ENCODE measurements at regions of chr19 and their contacts with region 1.

Region 1: DNA sequence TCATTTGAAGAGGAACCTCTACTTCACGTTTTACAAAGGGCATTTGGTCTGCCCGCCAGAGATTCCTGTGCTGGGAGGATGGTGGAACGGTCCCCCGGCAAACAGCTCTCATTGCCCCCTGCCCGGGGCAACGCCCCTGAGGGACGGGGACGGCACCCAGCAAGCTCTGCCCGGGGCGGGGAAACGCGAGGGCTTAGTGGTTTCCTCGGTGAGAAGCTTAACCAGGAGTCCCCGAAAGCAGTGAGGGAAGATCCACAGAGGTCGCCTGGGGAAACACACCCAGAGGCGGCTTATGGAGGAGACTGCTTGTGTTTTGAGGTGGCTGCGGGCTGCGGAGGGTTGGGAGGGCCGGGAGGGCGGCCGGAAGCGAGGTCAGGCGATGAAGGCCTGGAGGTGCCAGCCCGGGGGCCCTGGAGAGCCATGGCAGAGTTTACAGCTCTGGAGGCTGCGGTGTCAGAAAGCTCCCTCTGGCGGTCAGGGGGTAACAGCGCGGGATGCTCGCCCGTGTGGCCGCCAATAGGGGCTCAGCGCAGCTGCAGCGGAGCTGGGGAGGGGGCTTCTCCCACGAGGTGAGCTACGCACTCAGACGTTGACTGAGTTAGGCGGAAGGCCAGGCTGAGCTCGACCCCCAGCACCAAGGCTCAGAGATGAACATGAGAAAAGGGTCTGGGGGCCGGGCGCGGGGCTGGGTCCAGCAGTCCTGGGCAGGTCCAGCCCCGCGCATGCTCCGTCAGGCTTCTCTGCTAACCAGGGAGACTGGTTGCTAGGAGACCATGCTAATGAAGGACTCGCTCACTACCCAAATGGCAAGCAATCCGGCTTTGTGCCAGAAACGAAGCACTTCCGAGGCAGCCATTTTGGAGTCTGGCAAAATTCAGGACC is 652 bp upstream of the TPGS1 start:
- DNase-seq: peak; percentile 85 to 98 (median 92)
- ATAC-seq: peak; percentile 52
- H3K4me3 ChIP-seq: peak overlapping the region; percentile 91
- H3K4me3 Mint-ChIP-seq: peak overlapping the region; percentile 98
- H3K27ac ChIP-seq: peak overlapping the region; percentile 88 to 99
- H3K27ac Mint-ChIP-seq: peak overlapping the region; percentile 94
- H3K4me1 ChIP-seq: peaks cover 55% of the 10 kb centered on the region
- H3K4me1 Mint-ChIP-seq: peaks cover 37% of the 10 kb centered on the region
- H3K27me3 ChIP-seq: no peaks in the 10 kb centered on the region
- H3K27me3 Mint-ChIP-seq: no peaks in the 10 kb centered on the region
- CTCF ChIP-seq: peak; percentile 99

Region 2: DNA sequence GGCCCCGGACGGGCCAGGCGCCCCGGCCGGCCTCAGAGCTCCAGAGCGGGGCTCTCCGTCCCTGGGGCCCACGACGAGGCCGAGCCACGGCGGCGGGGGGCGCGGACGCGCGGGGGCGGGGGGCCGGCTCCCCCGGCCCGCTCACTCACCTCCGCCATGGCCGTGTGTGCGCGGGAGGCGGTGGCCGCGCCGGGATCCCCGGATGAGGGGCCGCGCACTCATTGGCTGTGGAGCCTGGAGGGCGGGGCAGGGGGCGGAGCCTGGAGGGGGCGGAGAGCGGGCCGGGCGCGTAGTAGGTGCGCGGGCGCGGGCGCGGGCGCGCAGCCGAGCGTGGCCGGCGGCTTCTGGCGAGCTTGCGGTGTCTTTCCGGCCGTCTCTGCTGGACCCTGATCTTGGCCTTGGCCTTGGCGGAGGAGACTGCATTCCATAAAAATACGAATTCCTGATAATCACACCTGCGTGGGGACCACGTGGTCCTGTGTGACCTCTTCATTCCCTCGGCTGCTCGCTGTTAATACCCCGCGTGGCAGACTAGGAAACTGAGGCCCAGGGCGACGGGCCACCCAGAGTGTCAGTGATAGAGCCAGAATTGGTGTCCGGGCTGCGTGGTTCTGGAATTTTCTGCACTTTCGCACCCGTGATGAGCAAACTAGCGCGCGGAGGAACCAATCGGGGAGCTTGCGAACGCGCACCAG is 161.9 kb before region 1 on chr19 and contains the start of gene MIER2:
- CTCF ChIA-PET with region 1: interaction called, 5 read pairs
- POLR2A ChIA-PET with region 1: no interaction called
- intact Hi-C with region 1: loop called in 1 of 2 experiments (anchors 5 kb)
- DNase-seq: peak; percentile 74 to 96 (median 88)
- ATAC-seq: peak; percentile 92
- H3K4me3 ChIP-seq: peak within 1 kb of the TSS; percentile 71
- H3K4me3 Mint-ChIP-seq: peak within 1 kb of the TSS; percentile 91
- H3K27ac ChIP-seq: no peak within 1 kb of the TSS
- H3K27ac Mint-ChIP-seq: peak within 1 kb of the TSS; percentile 63
- H3K4me1 ChIP-seq: peaks cover 46% of the 10 kb centered on the region
- H3K4me1 Mint-ChIP-seq: peaks cover 51% of the 10 kb centered on the region
- H3K27me3 ChIP-seq: no peaks in the 10 kb centered on the region
- H3K27me3 Mint-ChIP-seq: no peaks in the 10 kb centered on the region
- CTCF ChIP-seq: no peak
- total RNA-seq, gene MIER2: 9.5 to 11.5 TPM

Region 3: DNA sequence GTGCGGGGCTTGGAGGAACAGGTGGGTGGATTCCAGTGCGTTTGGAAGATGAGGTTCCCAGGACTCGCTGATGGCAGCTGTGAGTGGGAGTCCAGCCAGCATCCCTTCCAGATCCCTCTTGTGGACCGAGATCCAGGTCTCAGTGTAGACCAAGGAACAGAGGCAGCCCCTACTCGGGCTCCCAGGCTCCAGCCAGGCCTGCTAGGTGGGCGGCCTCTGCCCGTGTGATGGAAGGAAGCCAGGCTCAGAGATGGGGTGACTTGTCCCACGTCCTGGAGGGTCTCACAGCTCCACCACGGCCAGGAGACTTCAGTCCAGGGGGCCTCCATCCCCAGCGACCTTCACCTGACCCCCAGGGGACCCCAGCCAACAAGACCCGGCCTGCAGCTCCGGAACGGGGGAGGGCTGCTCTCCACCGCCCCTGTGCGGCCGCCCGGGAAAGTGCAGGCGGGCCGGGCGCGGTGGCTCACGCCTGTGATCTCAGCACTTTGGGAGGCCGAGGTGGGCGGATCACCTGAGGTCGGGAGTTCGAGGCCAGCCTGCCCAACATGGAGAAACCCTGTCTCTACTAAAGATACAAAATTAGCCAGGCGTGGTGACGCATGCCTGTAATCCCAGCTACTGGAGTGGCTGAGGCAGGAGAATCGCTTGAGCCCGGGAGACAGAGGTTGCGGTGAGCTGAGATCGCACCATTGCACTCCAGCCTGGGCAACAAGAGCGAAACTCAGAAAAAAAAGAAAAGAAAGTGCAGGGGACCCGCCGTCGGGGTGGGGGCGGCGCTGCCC is 11.1 kb before region 1 on chr19:
- CTCF ChIA-PET with region 1: interaction called, 18 read pairs
- POLR2A ChIA-PET with region 1: interaction called, 7 read pairs
- intact Hi-C with region 1: no loop called
- DNase-seq: peak in 11 of 14 experiments; percentile 20 to 69 (median 47)
- ATAC-seq: peak; percentile 73
- H3K4me3 ChIP-seq: no peak overlapping the region
- H3K4me3 Mint-ChIP-seq: no peak overlapping the region
- H3K27ac ChIP-seq: no peak overlapping the region
- H3K27ac Mint-ChIP-seq: no peak overlapping the region
- H3K4me1 ChIP-seq: peaks cover 23% of the 10 kb centered on the region
- H3K4me1 Mint-ChIP-seq: no peaks in the 10 kb centered on the region
- H3K27me3 ChIP-seq: peaks cover 19 to 27% of the 10 kb centered on the region in 2 experiments
- H3K27me3 Mint-ChIP-seq: peaks cover 18% of the 10 kb centered on the region
- CTCF ChIP-seq: peak; percentile 50

Region 4: GRCh38 chr19:531009-531752 is 24.5 kb after region 1 on chr19:
- CTCF ChIA-PET with region 1: interaction called, 58 read pairs
- POLR2A ChIA-PET with region 1: interaction called, 75 read pairs
- intact Hi-C with region 1: loop called (anchors 1 to 2 kb)
- DNase-seq: peak; percentile 70 to 95 (median 88)
- ATAC-seq: peak; percentile 79
- H3K4me3 ChIP-seq: peak overlapping the region; percentile 72
- H3K4me3 Mint-ChIP-seq: peak overlapping the region; percentile 87
- H3K27ac ChIP-seq: peak overlapping the region; percentile 34 to 75
- H3K27ac Mint-ChIP-seq: peak overlapping the region; percentile 61
- H3K4me1 ChIP-seq: peaks cover 45% of the 10 kb centered on the region
- H3K4me1 Mint-ChIP-seq: peaks cover 9% of the 10 kb centered on the region
- H3K27me3 ChIP-seq: peaks cover 0 to 3% of the 10 kb centered on the region in 2 experiments
- H3K27me3 Mint-ChIP-seq: no peaks in the 10 kb centered on the region
- CTCF ChIP-seq: no peak

Region 5: DNA sequence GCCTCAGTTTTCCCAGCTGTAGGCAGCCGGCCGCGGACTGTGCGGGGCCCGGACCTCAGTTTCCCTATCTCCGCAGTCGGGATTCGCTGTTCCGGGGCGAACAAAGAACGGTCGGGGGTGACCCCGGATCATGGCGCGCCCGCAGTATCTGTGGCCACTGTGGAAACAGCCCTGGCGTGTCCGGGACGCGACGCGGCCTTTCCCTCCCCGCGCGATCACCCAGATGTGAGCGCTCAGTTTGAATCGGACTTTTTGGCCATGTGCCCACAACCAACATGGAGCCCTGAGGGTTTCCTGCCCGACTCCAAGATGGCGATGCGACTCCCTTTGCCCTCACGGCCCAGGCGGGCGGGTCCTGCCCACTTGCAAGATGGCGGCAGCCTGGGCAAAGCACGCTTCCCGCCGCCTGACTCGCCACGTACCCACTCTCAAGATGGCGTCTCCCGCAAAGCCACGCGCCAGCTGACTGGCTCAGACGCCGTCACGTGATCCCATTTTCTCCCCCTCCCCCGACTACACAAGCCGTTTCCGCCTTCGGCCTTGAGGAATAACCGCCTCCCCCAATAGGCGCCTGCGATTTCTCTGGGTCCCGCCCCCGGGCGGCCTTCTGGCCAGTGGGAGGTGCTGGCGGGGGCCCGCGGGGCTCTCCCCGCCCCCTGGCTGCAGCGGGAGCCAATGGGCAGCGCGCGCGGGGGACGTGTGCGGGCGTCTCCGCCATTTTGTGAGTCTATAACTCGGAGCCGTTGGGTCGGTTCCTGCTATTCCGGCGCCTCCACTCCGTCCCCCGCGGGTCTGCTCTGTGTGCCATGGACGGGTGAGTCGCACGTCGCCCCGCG is 290.3 kb after region 1 on chr19 and contains the start of gene PTBP1:
- CTCF ChIA-PET with region 1: no interaction called
- POLR2A ChIA-PET with region 1: interaction called, 9 read pairs
- intact Hi-C with region 1: loop called in 1 of 2 experiments (anchors 5 kb)
- DNase-seq: peak; percentile 97 to 100 (median 99)
- ATAC-seq: peak; percentile 83
- H3K4me3 ChIP-seq: peak within 1 kb of the TSS; percentile 87
- H3K4me3 Mint-ChIP-seq: peak within 1 kb of the TSS; percentile 89
- H3K27ac ChIP-seq: peak within 1 kb of the TSS; percentile 67 to 72
- H3K27ac Mint-ChIP-seq: peak within 1 kb of the TSS; percentile 87
- H3K4me1 ChIP-seq: peaks cover 48% of the 10 kb centered on the region
- H3K4me1 Mint-ChIP-seq: peaks cover 36% of the 10 kb centered on the region
- H3K27me3 ChIP-seq: no peaks in the 10 kb centered on the region
- H3K27me3 Mint-ChIP-seq: no peaks in the 10 kb centered on the region
- CTCF ChIP-seq: no peak
- total RNA-seq, gene PTBP1: 246 to 252 TPM

Region 6: DNA sequence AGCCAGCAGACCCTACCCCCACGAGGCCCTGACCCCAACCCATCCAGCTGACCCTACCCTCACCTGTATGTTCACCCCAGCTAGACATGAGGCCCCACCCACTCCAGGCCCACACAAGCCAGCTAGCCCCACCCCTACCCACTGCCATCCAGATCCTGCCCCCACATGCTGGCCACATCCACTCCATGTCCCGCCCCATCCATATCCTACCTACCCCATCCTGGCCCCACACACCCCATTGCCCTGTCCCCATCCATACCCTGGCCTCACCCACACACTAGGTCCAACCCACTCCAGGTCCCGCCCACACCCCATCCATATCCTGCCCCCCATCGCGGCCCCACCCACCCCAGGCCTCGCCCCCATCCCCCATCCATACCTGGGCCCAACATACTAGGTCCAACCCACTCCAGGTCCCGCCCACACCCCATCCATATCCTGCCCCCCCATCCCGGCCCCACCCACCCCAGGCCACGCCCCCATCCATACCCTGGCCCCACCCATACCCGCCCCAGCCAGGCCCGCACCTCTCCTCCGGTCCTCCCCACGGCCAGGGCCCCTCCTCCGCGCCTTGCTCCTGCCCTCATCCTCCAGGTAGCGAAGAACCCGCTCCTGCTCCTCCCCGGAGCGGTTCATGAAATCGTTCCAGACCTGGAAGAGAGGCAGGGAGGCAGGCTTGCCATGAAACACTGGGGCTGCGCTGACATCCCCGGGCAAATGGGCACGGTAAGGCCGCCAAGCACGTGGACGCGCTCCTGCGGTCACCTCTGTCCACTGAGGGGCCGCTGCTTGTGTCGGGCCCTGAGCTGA is 393.9 kb after region 1 on chr19:
- CTCF ChIA-PET with region 1: no interaction called
- POLR2A ChIA-PET with region 1: no interaction called
- intact Hi-C with region 1: no loop called
- DNase-seq: peak in 7 of 14 experiments; percentile 38 to 72 (median 64)
- ATAC-seq: peak; percentile 77
- H3K4me3 ChIP-seq: no peak overlapping the region
- H3K4me3 Mint-ChIP-seq: no peak overlapping the region
- H3K27ac ChIP-seq: no peak overlapping the region
- H3K27ac Mint-ChIP-seq: peak overlapping the region; percentile 42
- H3K4me1 ChIP-seq: peaks cover 49% of the 10 kb centered on the region
- H3K4me1 Mint-ChIP-seq: peaks cover 28% of the 10 kb centered on the region
- H3K27me3 ChIP-seq: no peaks in the 10 kb centered on the region
- H3K27me3 Mint-ChIP-seq: no peaks in the 10 kb centered on the region
- CTCF ChIP-seq: no peak